ENCODE measurements at regions of chr2 and their contacts with region 1.

Region 1: DNA sequence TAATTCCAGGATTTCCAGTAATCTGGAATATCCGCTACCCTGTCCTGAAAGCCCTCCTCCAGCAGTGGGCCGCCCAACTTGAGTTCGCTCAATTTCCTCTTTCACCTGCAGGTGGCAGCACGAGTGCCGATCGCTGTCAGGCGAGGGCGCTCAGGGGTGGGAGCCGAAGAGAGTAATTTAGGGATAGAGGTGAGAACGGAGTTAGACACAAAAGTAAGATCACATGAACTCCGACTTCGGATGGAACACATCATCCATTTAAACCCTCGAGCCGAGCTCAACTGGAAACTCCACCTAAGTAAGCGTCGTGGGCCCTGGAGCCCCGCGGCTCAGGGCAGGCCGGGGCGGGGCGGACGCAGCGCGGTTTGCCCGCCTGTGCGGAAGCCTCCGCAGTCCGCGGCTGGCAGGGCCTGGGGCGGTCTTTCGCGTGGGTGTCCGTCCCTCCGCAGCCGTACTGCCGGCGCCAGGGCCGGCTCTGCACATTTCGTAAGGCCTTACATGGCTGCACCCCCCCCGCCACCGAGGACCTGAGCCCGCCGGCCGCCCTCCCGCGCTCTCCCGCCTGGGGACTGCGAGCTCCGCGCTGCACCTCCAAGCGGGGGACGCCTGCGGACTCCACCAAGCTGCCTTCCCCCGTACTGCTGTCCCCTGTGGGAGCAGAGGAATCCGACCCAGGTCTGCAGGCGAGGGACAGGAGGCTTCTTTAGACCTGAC is 61.2 kb downstream of the SEMA4F start:
- DNase-seq: no peak
- H3K4me3 ChIP-seq: peak overlapping the region; percentile 61
- CTCF ChIP-seq: peak; percentile 95

Region 2: GRCh38 chr2:74632209-74632938 is 82.9 kb before region 1 on chr2:
- CTCF ChIA-PET with region 1: no interaction called
- POLR2A ChIA-PET with region 1: no interaction called
- DNase-seq: no peak
- H3K4me3 ChIP-seq: no peak overlapping the region
- CTCF ChIP-seq: peak; percentile 1

Region 3: DNA sequence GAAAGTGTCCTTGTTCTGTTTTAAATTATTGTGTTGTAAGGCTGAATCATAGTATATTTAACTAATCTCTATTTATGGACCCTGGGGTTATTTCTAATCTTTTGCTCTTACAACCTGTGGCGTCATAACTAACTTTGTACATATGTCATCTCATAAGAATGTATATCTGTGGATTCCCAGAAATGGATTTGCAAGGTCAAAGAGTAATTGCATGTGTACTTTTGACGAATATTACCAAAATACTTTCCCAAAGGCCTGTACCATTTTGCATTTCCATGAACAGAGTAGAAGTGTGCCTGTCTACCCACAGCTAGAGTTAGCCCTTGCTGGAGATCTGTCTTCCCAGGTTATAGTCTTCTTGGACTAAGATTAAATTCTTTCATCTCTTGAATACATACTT is 18.4 kb before region 1 on chr2:
- CTCF ChIA-PET with region 1: interaction called, 97 read pairs
- POLR2A ChIA-PET with region 1: no interaction called
- DNase-seq: no peak
- H3K4me3 ChIP-seq: no peak overlapping the region
- CTCF ChIP-seq: no peak

Region 4: DNA sequence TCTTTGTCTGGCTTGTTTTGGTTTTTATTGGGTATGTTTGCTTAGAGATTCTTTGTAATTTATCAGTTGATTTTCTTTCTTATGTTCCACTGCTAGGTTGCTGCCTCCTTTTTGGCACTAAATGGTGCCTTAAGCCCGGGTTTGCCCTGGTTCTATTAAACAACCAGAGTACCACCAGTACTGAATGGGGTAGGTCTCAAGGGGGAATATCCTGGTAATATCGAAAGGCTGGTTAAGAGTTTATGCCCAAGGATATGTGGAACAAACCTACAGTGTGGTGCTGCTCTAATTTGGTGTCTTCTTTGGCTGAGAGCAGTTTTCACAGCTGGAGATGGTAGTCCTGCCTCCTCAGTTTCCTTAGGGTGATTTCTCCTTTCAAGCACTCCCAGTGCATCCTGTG is 15.3 kb after region 1 on chr2:
- CTCF ChIA-PET with region 1: interaction called, 35 read pairs
- POLR2A ChIA-PET with region 1: no interaction called
- DNase-seq: no peak
- H3K4me3 ChIP-seq: no peak overlapping the region
- CTCF ChIP-seq: no peak

Region 5: GRCh38 chr2:74833418-74834233 is 118.4 kb after region 1 on chr2 and contains the start of gene HK2:
- CTCF ChIA-PET with region 1: interaction called, 95 read pairs
- POLR2A ChIA-PET with region 1: no interaction called
- DNase-seq: no peak
- H3K4me3 ChIP-seq: peak within 1 kb of the TSS; percentile 93
- CTCF ChIP-seq: no peak

Region 6: GRCh38 chr2:74864846-74865722 is 149.8 kb after region 1 on chr2:
- CTCF ChIA-PET with region 1: interaction called, 12 read pairs
- POLR2A ChIA-PET with region 1: no interaction called
- DNase-seq: no peak
- H3K4me3 ChIP-seq: no peak overlapping the region
- CTCF ChIP-seq: no peak

Measured in AG04449 (cell line).